Psoas muscle (tissue), 8 donors: ENCODE measurements at regions of chr10 and their contacts with region 1.

Region 1: DNA sequence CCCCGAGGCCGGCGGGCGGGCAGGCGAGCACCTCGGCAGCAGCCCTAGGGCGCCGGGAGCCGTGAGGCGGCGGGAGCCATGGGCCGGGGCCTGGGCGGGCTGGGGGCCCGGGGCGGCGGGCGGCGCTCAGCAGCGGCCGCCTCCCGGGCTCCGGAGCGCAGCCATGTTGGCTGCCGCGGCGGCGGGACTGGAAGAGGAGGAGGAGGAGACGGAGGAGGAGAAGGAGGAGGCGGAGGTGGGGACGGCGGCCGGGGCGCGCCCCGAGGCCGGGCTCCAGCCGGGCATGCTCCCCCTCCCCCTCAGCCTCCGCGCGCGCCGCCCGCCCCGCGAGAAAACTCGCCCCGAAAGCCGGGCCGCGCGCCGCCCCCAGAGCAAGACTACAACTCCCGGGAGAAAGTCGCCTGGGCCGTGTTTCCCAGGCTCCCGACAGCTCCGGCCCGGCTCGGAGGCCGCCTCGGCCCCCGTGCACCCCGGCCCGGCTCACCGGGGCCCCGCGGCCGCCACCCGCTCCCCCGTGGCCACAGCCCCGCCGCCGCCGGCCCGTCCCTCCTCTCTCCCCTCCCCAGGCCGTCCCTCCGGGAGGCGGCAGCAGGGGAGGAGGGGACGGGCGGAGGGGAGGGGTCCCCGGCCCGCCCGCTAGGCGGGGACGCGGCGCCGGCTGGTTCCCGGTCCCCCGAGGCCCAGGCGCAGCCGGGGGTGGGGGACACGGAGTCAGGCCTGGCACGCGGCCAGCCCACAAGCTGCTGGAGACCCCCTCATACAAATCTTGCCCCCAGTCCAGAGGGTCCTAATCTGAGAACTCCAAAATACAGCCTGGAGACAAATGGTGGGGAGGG is at the start of gene DLG5:
- DNase-seq: peak; percentile 78 to 85
- ATAC-seq: peak; percentile 75 to 82 (median 77)
- H3K4me3 ChIP-seq: peak within 1 kb of the TSS; percentile 90
- H3K27ac ChIP-seq: peak within 1 kb of the TSS; percentile 84
- H3K4me1 ChIP-seq: peaks cover 10% of the 10 kb centered on the region
- H3K27me3 ChIP-seq: no peaks in the 10 kb centered on the region
- CTCF ChIP-seq: no peak
- total RNA-seq, gene DLG5: 36.9 to 62.9 (median 39.9) TPM

Region 2: DNA sequence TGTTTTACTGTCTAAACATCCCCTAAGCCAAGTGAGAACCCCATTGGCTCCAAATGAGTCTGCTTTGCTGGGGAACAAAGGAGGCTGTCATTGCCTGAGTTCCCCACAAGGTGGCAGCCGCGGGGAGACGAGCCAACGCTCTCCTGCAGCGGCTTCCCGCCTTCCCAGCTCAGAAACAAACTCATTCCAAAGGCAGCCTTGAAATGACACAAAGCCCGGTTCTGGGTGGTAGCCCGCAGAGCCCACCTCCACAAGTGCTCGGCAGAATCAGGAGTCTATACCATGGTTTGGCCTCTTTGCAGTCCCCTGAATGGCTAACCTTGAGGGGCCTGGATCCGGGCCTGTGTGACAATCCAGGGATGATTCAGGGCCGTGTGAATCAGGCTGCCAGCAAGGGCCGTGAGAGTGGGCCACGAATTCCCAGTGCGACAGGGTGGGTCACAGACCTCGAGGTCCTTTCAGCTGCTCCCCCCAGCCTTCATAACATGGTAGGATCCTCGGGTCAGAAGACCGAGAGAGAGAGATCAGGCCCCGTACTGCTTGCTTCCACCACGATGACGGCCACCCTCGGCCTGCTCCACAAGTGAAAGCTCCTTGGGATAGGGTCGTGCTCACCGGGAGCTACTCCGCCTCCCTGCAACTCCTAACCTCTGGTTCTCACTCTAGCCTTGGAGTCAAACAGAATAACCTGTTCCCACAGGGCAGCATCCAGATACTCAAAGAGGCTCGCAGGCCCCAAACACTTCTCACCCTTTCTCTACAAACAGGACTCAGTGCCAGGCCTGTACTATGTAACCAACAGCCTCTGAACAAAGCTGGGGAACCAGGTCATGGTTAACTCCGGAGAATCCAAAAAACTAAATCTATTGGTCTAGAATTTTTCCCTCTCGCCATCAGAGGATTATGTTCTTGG is 79.8 kb before region 1 on chr10:
- intact Hi-C with region 1: loop called in 1 of 2 experiments (anchors 5 kb)
- DNase-seq: peak; percentile 77 to 85
- ATAC-seq: peak; percentile 71 to 90 (median 82)
- H3K4me3 ChIP-seq: no peak overlapping the region
- H3K27ac ChIP-seq: peak overlapping the region; percentile 66
- H3K4me1 ChIP-seq: peaks cover 7% of the 10 kb centered on the region
- H3K27me3 ChIP-seq: no peaks in the 10 kb centered on the region
- CTCF ChIP-seq: peak; percentile 98

Region 3: DNA sequence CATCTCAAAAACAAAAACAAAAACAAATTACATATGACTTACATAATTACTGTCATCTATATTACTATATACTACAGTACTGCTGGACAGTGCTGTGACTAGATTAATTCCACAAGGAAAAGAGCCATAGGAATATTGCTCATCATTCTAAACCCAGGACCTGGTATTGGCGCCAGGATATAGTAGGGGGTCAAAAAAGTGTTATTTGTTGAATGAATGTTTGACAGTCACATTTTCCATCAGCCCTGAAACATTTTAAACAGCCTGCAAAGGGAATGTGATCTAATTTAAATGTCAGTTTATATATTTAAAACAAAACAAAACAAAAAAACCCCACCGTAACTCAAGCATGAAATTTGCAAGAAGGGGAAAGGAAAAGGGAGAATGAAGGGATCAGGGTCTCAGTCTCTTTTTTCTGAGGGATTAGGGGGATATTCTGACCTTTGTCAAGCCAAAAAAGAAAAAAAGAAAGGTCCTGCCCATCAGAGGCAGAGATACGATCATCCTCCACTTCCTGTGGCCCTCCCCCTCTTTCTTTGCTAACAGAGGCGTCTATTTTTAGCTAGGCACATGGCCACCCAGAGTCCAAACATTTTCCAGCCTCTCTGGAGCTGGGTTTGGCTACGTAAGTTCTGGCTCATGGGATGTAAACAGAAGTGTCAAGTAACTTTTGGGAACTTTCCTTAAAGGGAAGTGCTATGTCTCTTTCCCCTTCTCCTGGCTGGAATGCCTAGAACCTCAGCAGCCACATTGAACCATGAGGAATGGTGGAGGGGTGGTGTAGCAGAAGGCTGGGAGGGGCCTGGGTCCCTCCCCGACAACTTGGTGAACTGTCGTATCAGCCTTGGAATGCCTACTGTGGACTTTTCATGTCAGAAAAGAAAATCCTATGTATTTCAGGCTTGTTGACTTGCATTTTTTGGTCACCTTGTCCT is 44.4 kb after region 1 on chr10:
- intact Hi-C with region 1: loop called in 1 of 2 experiments (anchors 5 kb)
- DNase-seq: peak; percentile 65 to 75
- ATAC-seq: peak; percentile 92 to 96 (median 94)
- H3K4me3 ChIP-seq: peak overlapping the region; percentile 33
- H3K27ac ChIP-seq: peak overlapping the region; percentile 88
- H3K4me1 ChIP-seq: peaks cover 30% of the 10 kb centered on the region
- H3K27me3 ChIP-seq: no peaks in the 10 kb centered on the region
- CTCF ChIP-seq: no peak

Region 4: GRCh38 chr10:78004215-78005026 is 77.6 kb after region 1 on chr10:
- intact Hi-C with region 1: loop called in 1 of 2 experiments (anchors 5 kb)
- DNase-seq: peak in 1 of 2 donors; percentile 23
- ATAC-seq: peak; percentile 41 to 75 (median 66)
- H3K4me3 ChIP-seq: no peak overlapping the region
- H3K27ac ChIP-seq: peak overlapping the region; percentile 86
- H3K4me1 ChIP-seq: peaks cover 34% of the 10 kb centered on the region
- H3K27me3 ChIP-seq: no peaks in the 10 kb centered on the region
- CTCF ChIP-seq: peak; percentile 33

Region 5: DNA sequence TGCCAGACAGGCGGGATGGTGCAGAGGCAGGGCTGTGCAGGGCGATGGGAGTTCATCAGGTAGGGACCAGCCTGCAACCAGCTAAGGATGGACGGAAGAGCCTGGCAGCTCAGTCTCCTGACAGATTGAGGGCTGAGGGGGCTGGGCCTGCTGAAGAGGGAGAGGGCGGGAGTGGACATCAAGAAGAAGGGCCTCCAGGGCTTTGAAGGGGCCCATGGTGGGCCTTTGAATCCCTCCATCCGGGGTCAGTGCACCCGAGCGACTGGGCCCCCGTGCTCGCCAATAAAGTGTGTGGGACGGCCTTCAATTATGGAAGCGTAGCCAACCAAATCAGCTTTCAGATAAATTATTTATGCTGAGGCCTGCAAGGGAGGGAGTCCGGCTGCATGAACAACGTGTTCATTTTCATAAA is 538.1 kb after region 1 on chr10:
- intact Hi-C with region 1: no loop called
- DNase-seq: no peak
- ATAC-seq: no peak
- H3K4me3 ChIP-seq: no peak overlapping the region
- H3K27ac ChIP-seq: no peak overlapping the region
- H3K4me1 ChIP-seq: no peaks in the 10 kb centered on the region
- H3K27me3 ChIP-seq: no peaks in the 10 kb centered on the region
- CTCF ChIP-seq: no peak